ENCODE measurements at regions of chr5 and their contacts with region 1.

Region 1: GRCh38 chr5:175729829-175730277 is 72.0 kb downstream of the HRH2 start:
- DNase-seq: peak; percentile 97 to 100
- H3K4me3 ChIP-seq: peak overlapping the region; percentile 27 to 57 (median 44); a peak in 7 of 8 replicates
- H3K27ac ChIP-seq: no peak overlapping the region
- H3K4me1 ChIP-seq: peaks cover 0 to 13% (median 7%) of the 10 kb centered on the region in 4 experiments; a peak in 6 of 7 replicates
- H3K27me3 ChIP-seq: no peaks in the 10 kb centered on the region; a peak in 2 of 7 replicates
- CTCF ChIP-seq: peak in 2 of 3 experiments; percentile 99 to 100; a peak in 3 of 4 replicates
- EP300 ChIP-seq: peak in 1 of 2 experiments; percentile 66; a peak in 1 of 3 replicates
- POLR2A ChIP-seq: no peak
- RAD21 ChIP-seq: peak; percentile 100

Region 2: GRCh38 chr5:175123542-175123941 is 606.3 kb before region 1 on chr5:
- CTCF ChIA-PET with region 1: no interaction called
- POLR2A ChIA-PET with region 1: no interaction called
- DNase-seq: no peak
- H3K4me3 ChIP-seq: no peak overlapping the region
- H3K27ac ChIP-seq: no peak overlapping the region
- H3K4me1 ChIP-seq: peaks cover 0 to 5% (median 3%) of the 10 kb centered on the region in 4 experiments; a peak in 2 of 7 replicates
- H3K27me3 ChIP-seq: no peaks in the 10 kb centered on the region
- CTCF ChIP-seq: no peak
- EP300 ChIP-seq: no peak
- POLR2A ChIP-seq: no peak
- RAD21 ChIP-seq: no peak

Region 3: GRCh38 chr5:175534070-175534932 is 195.6 kb before region 1 on chr5:
- CTCF ChIA-PET with region 1: interaction called, 136 read pairs
- POLR2A ChIA-PET with region 1: interaction called, 3 read pairs
- DNase-seq: peak; percentile 82 to 91
- H3K4me3 ChIP-seq: peak overlapping the region in 3 of 4 experiments; percentile 7 to 33 (median 14); a peak in 3 of 8 replicates
- H3K27ac ChIP-seq: no peak overlapping the region
- H3K4me1 ChIP-seq: peaks cover 0 to 17% (median 11%) of the 10 kb centered on the region in 4 experiments; a peak in 6 of 7 replicates
- H3K27me3 ChIP-seq: no peaks in the 10 kb centered on the region
- CTCF ChIP-seq: peak; percentile 100
- EP300 ChIP-seq: peak in 1 of 2 experiments; percentile 55; a peak in 1 of 3 replicates
- POLR2A ChIP-seq: no peak
- RAD21 ChIP-seq: peak; percentile 100

Region 4: GRCh38 chr5:175741556-175741955 is 11.7 kb after region 1 on chr5:
- CTCF ChIA-PET with region 1: interaction called, 43 read pairs
- POLR2A ChIA-PET with region 1: no interaction called
- DNase-seq: no peak
- H3K4me3 ChIP-seq: no peak overlapping the region
- H3K27ac ChIP-seq: no peak overlapping the region
- H3K4me1 ChIP-seq: no peaks in the 10 kb centered on the region
- H3K27me3 ChIP-seq: 0 out of 7 replicates have a peak, but pooled peaks cover 0 to 5% (median under 1%) of the 10 kb centered on the region in 4 experiments
- CTCF ChIP-seq: no peak
- EP300 ChIP-seq: no peak
- POLR2A ChIP-seq: no peak
- RAD21 ChIP-seq: no peak

Region 5: GRCh38 chr5:175796536-175797499 is 67.0 kb after region 1 on chr5:
- CTCF ChIA-PET with region 1: interaction called, 41 read pairs
- POLR2A ChIA-PET with region 1: no interaction called
- DNase-seq: peak; percentile 56 to 95
- H3K4me3 ChIP-seq: peak overlapping the region; percentile 24 to 78 (median 60)
- H3K27ac ChIP-seq: no peak overlapping the region
- H3K4me1 ChIP-seq: peaks cover 2 to 12% (median 9%) of the 10 kb centered on the region in 4 experiments; a peak in 5 of 7 replicates
- H3K27me3 ChIP-seq: peaks cover 4 to 12% (median 8%) of the 10 kb centered on the region in 4 experiments; a peak in 6 of 7 replicates
- CTCF ChIP-seq: no peak
- EP300 ChIP-seq: peak in 1 of 2 experiments; percentile 91; a peak in 2 of 3 replicates
- POLR2A ChIP-seq: no peak
- RAD21 ChIP-seq: peak in 1 of 2 experiments; percentile 20; a peak in 1 of 4 replicates

Region 6: GRCh38 chr5:175847503-175847902 is 117.7 kb after region 1 on chr5:
- CTCF ChIA-PET with region 1: interaction called, 17 read pairs
- POLR2A ChIA-PET with region 1: no interaction called
- DNase-seq: no peak
- H3K4me3 ChIP-seq: no peak overlapping the region
- H3K27ac ChIP-seq: no peak overlapping the region
- H3K4me1 ChIP-seq: peaks cover 0 to 21% (median 14%) of the 10 kb centered on the region in 4 experiments; a peak in 6 of 7 replicates
- H3K27me3 ChIP-seq: no peaks in the 10 kb centered on the region
- CTCF ChIP-seq: peak in 2 of 3 experiments; percentile 83; a peak in 3 of 4 replicates
- EP300 ChIP-seq: no peak
- POLR2A ChIP-seq: no peak
- RAD21 ChIP-seq: peak; percentile 59 to 74

Region 7: GRCh38 chr5:175873088-175873454 is 143.2 kb after region 1 on chr5:
- CTCF ChIA-PET with region 1: interaction called, 65 read pairs
- POLR2A ChIA-PET with region 1: interaction called, 3 read pairs
- DNase-seq: peak in 1 of 2 experiments; percentile 92
- H3K4me3 ChIP-seq: peak overlapping the region in 2 of 4 experiments; percentile 38; a peak in 4 of 8 replicates
- H3K27ac ChIP-seq: no peak overlapping the region
- H3K4me1 ChIP-seq: peaks cover 6 to 14% (median 8%) of the 10 kb centered on the region in 4 experiments
- H3K27me3 ChIP-seq: peaks cover 0 to 19% (median 6%) of the 10 kb centered on the region in 4 experiments; a peak in 3 of 7 replicates
- CTCF ChIP-seq: peak; percentile 69 to 84 (median 77)
- EP300 ChIP-seq: no peak
- POLR2A ChIP-seq: no peak
- RAD21 ChIP-seq: peak; percentile 50 to 56